Activated T-helper 2 cell treated with anti-CD3 and anti-CD28 coated beads, Interferon-gamma antibody, Interleukin-2, Interleukin-4, amounts not matched to agents 10 μg/mL and 5 μg/mL and 100 μg/mL, durations not matched to agents 14 hours and 24 hours and 36 hours (primary cell): ENCODE measurements at regions of chr12 and their contacts with region 1.

Region 1: GRCh38 chr12:104604070-104604994 is 147.6 kb downstream of the CHST11 start:
- DNase-seq: peak; percentile 60
- H3K4me3 Mint-ChIP-seq: peak overlapping the region; percentile 19
- H3K27ac Mint-ChIP-seq: peak overlapping the region; percentile 86
- H3K4me1 Mint-ChIP-seq: peaks cover 61% of the 10 kb centered on the region
- H3K27me3 Mint-ChIP-seq: no peaks in the 10 kb centered on the region

Region 2: GRCh38 chr12:104381731-104382480 is 222.4 kb before region 1 on chr12:
- intact Hi-C with region 1: loop called (anchors 10 kb)
- DNase-seq: peak; percentile 63
- H3K4me3 Mint-ChIP-seq: no peak overlapping the region
- H3K27ac Mint-ChIP-seq: no peak overlapping the region
- H3K4me1 Mint-ChIP-seq: peaks cover 13% of the 10 kb centered on the region
- H3K27me3 Mint-ChIP-seq: peaks cover 9% of the 10 kb centered on the region

Region 3: GRCh38 chr12:104462931-104463339 is 141.4 kb before region 1 on chr12:
- intact Hi-C with region 1: loop called (anchors 1 kb)
- DNase-seq: peak; percentile 58
- H3K4me3 Mint-ChIP-seq: peak overlapping the region; percentile 74
- H3K27ac Mint-ChIP-seq: peak overlapping the region; percentile 92
- H3K4me1 Mint-ChIP-seq: peaks cover 68% of the 10 kb centered on the region
- H3K27me3 Mint-ChIP-seq: no peaks in the 10 kb centered on the region

Region 4: GRCh38 chr12:104569346-104570173 is 34.8 kb before region 1 on chr12:
- intact Hi-C with region 1: loop called (anchors 1 kb)
- DNase-seq: peak; percentile 51
- H3K4me3 Mint-ChIP-seq: peak overlapping the region; percentile 61
- H3K27ac Mint-ChIP-seq: peak overlapping the region; percentile 71
- H3K4me1 Mint-ChIP-seq: peaks cover 54% of the 10 kb centered on the region
- H3K27me3 Mint-ChIP-seq: no peaks in the 10 kb centered on the region

Region 5: DNA sequence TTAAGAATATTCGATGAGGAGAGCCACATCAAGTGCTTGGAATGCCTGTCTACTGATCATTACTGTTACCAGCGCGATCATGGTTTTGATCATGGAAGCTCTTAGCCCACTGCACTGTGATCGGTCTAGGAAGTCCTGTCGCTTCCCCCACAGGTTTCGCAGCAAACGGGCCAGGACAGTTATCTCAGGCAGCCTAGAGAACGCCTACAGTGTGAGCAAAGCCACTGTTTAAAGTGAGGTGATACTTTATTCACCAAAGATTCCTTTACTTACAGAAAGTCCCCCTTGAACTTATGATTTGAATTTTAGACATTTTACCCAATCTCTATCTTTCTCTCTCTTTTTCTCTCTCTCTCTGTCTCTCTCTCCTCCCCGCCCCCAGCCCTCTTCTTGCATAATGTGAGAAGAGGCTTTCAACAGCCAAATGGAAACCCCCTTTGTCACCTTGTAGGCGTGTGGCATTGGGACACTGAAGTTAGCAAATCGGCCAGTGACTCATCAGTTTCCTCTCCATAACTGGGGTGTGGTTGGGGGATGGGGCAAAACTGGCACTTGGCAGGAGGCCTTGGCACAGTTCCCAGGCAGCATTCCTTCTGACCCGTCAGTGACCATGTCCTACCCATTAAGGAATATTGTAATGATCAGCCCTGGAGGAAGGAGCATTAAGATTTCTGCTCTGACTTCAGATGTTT is 67.2 kb after region 1 on chr12:
- intact Hi-C with region 1: loop called (anchors 1 kb)
- DNase-seq: peak; percentile 54
- H3K4me3 Mint-ChIP-seq: peak overlapping the region; percentile 45
- H3K27ac Mint-ChIP-seq: peak overlapping the region; percentile 89
- H3K4me1 Mint-ChIP-seq: peaks cover 55% of the 10 kb centered on the region
- H3K27me3 Mint-ChIP-seq: no peaks in the 10 kb centered on the region

Region 6: GRCh38 chr12:104930388-104931326 is 326.3 kb after region 1 on chr12:
- intact Hi-C with region 1: loop called (anchors 1 kb)
- DNase-seq: no peak
- H3K4me3 Mint-ChIP-seq: no peak overlapping the region
- H3K27ac Mint-ChIP-seq: peak overlapping the region; percentile 82
- H3K4me1 Mint-ChIP-seq: peaks cover 33% of the 10 kb centered on the region
- H3K27me3 Mint-ChIP-seq: no peaks in the 10 kb centered on the region